Heart right ventricle (tissue), 16 donors: ENCODE measurements at regions of chr15 and their contacts with region 1.

Region 1: GRCh38 chr15:57561041-57561711 is 30.5 kb upstream of the MYZAP start:
- DNase-seq: peak; percentile 47 to 87
- ATAC-seq: peak; percentile 86 to 94 (median 92)
- H3K4me3 ChIP-seq: peak overlapping the region in 4 of 10 donors; percentile 3 to 30 (median 12)
- H3K27ac ChIP-seq: peak overlapping the region; percentile 33 to 84 (median 74)
- H3K4me1 ChIP-seq: peaks cover 0 to 39% (median 25%) of the 10 kb centered on the region in 9 donors
- H3K27me3 ChIP-seq: peaks cover 0 to 4% (median 0%) of the 10 kb centered on the region in 7 donors
- CTCF ChIP-seq: peak; percentile 92 to 98 (median 94)

Region 2: GRCh38 chr15:57510647-57511046 is 50.5 kb before region 1 on chr15:
- intact Hi-C with region 1: no loop called
- DNase-seq: peak; percentile 48 to 76
- ATAC-seq: peak; percentile 63 to 89 (median 76)
- H3K4me3 ChIP-seq: no peak overlapping the region
- H3K27ac ChIP-seq: peak overlapping the region in 6 of 10 donors; percentile 50 to 74 (median 60)
- H3K4me1 ChIP-seq: peaks cover 2 to 55% (median 31%) of the 10 kb centered on the region in 9 donors
- H3K27me3 ChIP-seq: no peaks in the 10 kb centered on the region
- CTCF ChIP-seq: no peak

Region 3: DNA sequence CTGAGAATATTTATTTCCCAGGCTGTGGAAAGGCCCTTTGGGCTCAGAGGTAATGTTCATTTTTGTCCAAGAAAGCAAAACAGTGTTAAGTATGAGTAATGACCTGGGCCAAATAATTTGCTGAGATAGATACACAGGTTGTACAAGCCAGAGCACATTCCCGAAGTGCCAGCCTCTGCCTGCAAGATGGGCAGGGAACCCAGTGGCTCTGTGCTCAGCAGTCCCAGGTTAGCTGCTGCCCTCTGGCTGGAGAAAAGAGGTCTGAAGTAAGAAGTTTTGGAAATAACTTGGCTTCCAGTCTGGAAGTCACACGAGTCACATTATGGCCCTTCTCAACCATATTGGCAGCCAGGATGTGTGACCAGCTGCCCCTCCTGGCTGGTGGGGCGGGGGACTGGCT is 50.8 kb after region 1 on chr15:
- intact Hi-C with region 1: loop called in 5 of 10 experiments (anchors 2 to 10 kb)
- DNase-seq: peak; percentile 38 to 54
- ATAC-seq: peak; percentile 27 to 76 (median 56)
- H3K4me3 ChIP-seq: no peak overlapping the region
- H3K27ac ChIP-seq: peak overlapping the region; percentile 56 to 94 (median 88)
- H3K4me1 ChIP-seq: peaks cover 8 to 89% (median 54%) of the 10 kb centered on the region in 9 donors
- H3K27me3 ChIP-seq: no peaks in the 10 kb centered on the region
- CTCF ChIP-seq: peak in 7 of 9 donors; percentile 27 to 64 (median 48)

Region 4: DNA sequence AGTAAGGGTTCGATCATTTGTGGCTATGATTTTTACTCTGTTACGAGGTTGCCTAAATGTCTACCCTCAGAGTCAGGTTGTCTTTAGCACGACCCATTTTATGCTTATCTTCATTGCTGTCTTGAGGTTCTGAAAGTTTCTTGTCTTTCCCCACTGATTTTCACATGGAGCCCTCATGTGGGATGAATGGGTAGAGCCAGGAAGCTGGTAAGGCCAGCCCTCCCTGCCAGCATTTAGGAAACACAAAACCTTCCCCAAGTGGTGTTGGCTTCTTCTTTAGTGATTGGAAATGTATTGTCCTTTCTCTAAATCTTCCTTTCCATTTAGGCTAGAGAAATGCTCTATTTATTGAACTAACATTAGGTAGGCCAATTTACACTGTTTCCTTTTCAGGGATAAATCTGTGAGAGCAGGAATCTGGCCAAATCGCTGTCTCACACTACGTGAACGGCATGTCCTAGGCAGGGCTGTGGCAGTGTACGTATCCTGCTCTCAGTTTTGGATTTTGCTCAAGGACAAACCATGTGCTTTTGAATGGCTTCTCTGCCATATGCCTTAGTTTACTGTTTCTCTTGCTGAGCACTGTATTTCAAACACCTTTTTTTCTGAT is 74.2 kb after region 1 on chr15:
- intact Hi-C with region 1: loop called in 4 of 10 experiments (anchors 5 to 10 kb)
- DNase-seq: peak in 1 of 2 donors; percentile 64
- ATAC-seq: peak; percentile 40 to 91 (median 80)
- H3K4me3 ChIP-seq: no peak overlapping the region
- H3K27ac ChIP-seq: peak overlapping the region; percentile 45 to 87 (median 78)
- H3K4me1 ChIP-seq: peaks cover 4 to 77% (median 55%) of the 10 kb centered on the region in 9 donors
- H3K27me3 ChIP-seq: no peaks in the 10 kb centered on the region
- CTCF ChIP-seq: peak in 5 of 9 donors; percentile 2 to 42 (median 41)

Region 5: DNA sequence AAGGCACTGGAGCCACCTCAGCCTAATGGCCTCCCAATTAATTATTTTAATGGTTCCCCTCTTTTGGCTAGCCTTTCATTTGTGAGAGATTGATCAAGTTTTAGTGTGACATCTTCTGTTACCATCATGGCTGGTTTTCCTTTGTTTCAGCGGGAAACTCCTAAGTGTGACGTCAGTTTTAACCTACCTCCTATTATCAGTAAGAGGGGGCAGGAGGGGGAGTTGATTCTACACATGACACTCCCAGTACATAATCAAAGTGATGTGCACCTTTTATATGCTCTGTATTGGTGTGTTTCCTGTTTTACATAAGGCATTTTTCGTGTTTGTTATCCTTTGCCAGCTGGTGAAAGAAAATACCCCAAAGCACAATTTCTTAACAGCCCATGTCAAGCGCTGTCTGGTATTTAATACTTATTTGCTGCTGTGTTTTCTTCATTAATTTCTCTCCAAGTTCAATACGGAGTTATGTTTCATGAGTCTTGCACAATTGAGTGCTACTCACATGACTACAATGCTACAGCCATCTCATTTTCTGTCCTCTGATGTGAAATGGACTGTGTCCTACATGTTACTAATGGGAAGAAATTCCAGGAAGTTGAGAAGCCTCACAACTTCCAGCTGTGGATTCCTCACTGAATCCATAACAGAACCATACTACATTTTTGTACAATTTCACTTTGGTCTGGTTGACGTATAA is 93.1 kb after region 1 on chr15:
- intact Hi-C with region 1: loop called in 2 of 10 experiments (anchors 5 kb)
- DNase-seq: no peak
- ATAC-seq: peak in 1 of 8 donors; percentile 19
- H3K4me3 ChIP-seq: no peak overlapping the region
- H3K27ac ChIP-seq: peak overlapping the region in 6 of 10 donors; percentile 21 to 70 (median 52)
- H3K4me1 ChIP-seq: peaks cover 5 to 75% (median 23%) of the 10 kb centered on the region in 9 donors
- H3K27me3 ChIP-seq: no peaks in the 10 kb centered on the region
- CTCF ChIP-seq: no peak

Region 6: DNA sequence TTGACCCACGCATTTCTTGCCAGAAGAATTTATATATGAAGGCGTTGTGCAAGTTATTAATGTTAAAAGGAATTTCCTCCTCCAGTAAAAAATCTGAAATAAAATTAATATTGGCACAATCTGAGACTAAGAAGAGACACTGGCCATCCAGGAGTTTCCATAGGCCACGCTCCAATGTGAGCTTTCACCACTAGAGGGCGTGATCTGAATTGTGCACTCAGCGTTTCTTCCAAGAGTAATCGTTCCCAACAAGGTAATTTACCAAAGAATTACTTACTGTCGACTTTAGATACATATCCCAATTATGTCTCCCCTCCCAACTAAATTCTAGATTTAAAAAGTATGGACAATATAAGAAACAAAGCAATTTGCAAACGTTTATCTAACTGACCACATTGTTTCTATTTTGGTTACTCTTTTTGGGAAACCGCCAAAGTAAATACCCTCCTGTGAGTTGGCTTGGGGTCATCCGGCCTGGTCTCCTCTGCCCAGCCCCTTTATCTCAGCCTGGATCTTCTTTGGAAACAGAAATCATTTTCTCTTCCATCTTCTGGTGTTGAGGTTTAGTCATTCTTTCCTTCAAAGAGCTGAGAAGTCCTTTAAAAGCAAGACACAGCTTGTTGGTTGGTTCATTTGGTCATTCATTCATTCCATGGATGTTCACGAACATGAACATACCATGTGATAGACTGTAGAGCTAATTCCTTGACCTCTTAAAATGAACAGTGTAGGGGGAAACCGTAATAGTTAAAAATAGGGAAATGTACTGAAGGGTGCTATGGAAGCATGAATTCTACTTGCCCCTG is 171.6 kb after region 1 on chr15:
- intact Hi-C with region 1: loop called in 2 of 10 experiments (anchors 5 to 10 kb)
- DNase-seq: peak in 1 of 2 donors; percentile 45
- ATAC-seq: peak in 6 of 8 donors; percentile 46 to 74 (median 64)
- H3K4me3 ChIP-seq: no peak overlapping the region
- H3K27ac ChIP-seq: no peak overlapping the region
- H3K4me1 ChIP-seq: peaks cover 0 to 19% (median 6%) of the 10 kb centered on the region in 9 donors
- H3K27me3 ChIP-seq: no peaks in the 10 kb centered on the region
- CTCF ChIP-seq: peak; percentile 68 to 94 (median 87)

Region 7: DNA sequence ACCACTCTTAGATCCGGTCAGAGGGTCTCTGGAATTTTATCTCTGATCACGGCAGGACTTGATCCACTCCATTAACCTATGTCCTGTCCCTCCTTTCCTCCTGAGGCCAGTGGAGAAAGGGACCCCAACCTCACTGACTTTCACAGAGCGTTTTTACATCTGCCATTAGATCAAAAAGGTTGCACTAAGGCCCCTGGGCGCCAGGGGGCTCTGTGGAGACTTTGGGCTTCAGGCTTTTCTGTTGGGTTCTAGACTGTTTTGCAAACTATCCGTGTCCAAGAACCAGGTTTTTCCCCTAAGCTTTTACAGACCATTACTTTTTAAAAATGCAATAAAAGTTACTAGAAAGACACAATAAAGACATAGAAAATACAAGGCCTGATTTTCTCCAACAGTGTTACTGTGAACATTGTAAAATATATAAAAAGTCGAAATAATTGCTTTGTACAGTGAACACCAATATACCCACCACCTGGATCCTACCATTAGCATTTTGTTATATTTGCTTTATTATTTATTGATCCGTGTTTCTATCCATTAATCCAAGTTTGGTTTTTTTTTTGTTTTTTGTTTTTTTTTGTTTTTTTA is 305.1 kb after region 1 on chr15:
- intact Hi-C with region 1: loop called in 3 of 10 experiments (anchors 5 to 10 kb)
- DNase-seq: peak; percentile 46 to 62
- ATAC-seq: peak in 3 of 8 donors; percentile 52 to 55 (median 54)
- H3K4me3 ChIP-seq: no peak overlapping the region
- H3K27ac ChIP-seq: no peak overlapping the region
- H3K4me1 ChIP-seq: no peaks in the 10 kb centered on the region
- H3K27me3 ChIP-seq: peaks cover 0 to 21% (median 3%) of the 10 kb centered on the region in 7 donors
- CTCF ChIP-seq: peak; percentile 67 to 84 (median 79)

Region 8: GRCh38 chr15:57932348-57932747 is 371.2 kb after region 1 on chr15:
- intact Hi-C with region 1: no loop called
- DNase-seq: no peak
- ATAC-seq: no peak
- H3K4me3 ChIP-seq: no peak overlapping the region
- H3K27ac ChIP-seq: no peak overlapping the region
- H3K4me1 ChIP-seq: no peaks in the 10 kb centered on the region
- H3K27me3 ChIP-seq: peaks cover 0 to 3% (median 0%) of the 10 kb centered on the region in 7 donors
- CTCF ChIP-seq: no peak